Activated CD4-positive, alpha-beta T cell treated with anti-CD3 and anti-CD28 coated beads, Interleukin-2, amount 10 ng/mL, durations not matched to agents 7 days and 5 days (primary cell): ENCODE measurements at regions of chr2 and their contacts with region 1.

Region 1: GRCh38 chr2:74833418-74834233 is at the start of gene HK2:
- DNase-seq: peak; percentile 84
- H3K4me3 Mint-ChIP-seq: peak within 1 kb of the TSS; percentile 93
- H3K27ac Mint-ChIP-seq: peak within 1 kb of the TSS; percentile 94
- H3K4me1 Mint-ChIP-seq: peaks cover 47% of the 10 kb centered on the region
- H3K27me3 Mint-ChIP-seq: no peaks in the 10 kb centered on the region
- total RNA-seq, gene HK2: 27.8 to 29.6 TPM

Region 2: GRCh38 chr2:74815941-74816340 is 17.7 kb before region 1 on chr2:
- CTCF ChIA-PET with region 1: no interaction called
- POLR2A ChIA-PET with region 1: no interaction called
- DNase-seq: no peak
- H3K4me3 Mint-ChIP-seq: no peak overlapping the region
- H3K27ac Mint-ChIP-seq: no peak overlapping the region
- H3K4me1 Mint-ChIP-seq: peaks cover 8% of the 10 kb centered on the region
- H3K27me3 Mint-ChIP-seq: peaks cover 26% of the 10 kb centered on the region

Region 3: GRCh38 chr2:74849228-74849892 is 15.7 kb after region 1 on chr2:
- CTCF ChIA-PET with region 1: interaction called, 39 read pairs
- POLR2A ChIA-PET with region 1: no interaction called
- DNase-seq: peak; percentile 57
- H3K4me3 Mint-ChIP-seq: peak overlapping the region; percentile 74
- H3K27ac Mint-ChIP-seq: peak overlapping the region; percentile 98
- H3K4me1 Mint-ChIP-seq: peaks cover 81% of the 10 kb centered on the region
- H3K27me3 Mint-ChIP-seq: no peaks in the 10 kb centered on the region